Colonic mucosa (tissue), 4 donors: ENCODE measurements at regions of chr7 and their contacts with region 1.

Region 1: DNA sequence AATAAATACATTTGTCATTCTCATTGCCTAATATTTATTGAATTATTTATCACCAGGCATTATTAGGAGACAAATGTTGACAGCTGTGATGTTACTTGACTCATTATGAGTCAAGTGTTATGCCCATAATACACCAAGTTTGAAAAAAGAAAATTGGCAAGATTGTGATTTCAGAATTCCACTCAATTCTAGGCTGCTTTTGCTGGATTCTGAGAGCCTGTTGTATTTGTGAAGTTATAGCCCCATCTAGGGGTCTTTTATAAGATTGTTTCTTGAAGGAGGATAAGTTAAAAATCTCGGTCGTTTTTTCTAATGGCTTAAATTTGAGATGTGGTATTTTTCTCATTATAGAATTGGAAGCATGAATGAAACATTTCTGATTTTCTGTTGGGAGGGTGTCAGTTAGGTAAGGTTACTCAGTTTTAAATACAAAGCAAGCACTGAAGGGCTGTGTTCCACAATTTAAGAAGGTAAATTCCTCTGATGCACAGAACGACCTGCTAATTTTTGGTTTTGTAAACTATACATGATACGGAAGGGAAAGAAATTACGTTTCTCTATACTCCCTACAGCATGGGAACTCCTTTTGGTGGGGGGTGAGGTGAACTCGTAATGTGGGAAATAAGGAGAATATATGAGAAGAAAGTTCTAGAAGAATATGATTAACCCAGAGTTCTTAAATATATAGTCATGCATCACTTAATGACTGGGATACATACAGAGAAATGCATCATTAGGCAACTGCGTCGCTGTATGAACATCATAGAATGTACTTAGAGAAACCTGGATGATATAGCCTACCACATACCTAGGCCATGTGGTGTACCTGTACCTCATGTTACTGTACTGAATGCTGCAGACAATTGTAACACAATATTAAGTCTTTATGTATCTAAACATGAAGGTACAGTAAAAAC is 2.6 kb downstream of the STK31 start:
- DNase-seq: no peak
- H3K4me3 ChIP-seq: no peak overlapping the region
- H3K27ac ChIP-seq: no peak overlapping the region
- H3K4me1 ChIP-seq: no peaks in the 10 kb centered on the region
- H3K27me3 ChIP-seq: no peaks in the 10 kb centered on the region
- CTCF ChIP-seq: peak; percentile 33

Region 2: GRCh38 chr7:23570592-23571200 is 141.9 kb before region 1 on chr7:
- intact Hi-C with region 1: loop called (anchors 2 kb)
- DNase-seq: peak; percentile 80
- H3K4me3 ChIP-seq: no peak overlapping the region
- H3K27ac ChIP-seq: no peak overlapping the region
- H3K4me1 ChIP-seq: no peaks in the 10 kb centered on the region
- H3K27me3 ChIP-seq: no peaks in the 10 kb centered on the region
- CTCF ChIP-seq: peak; percentile 77

Region 3: GRCh38 chr7:23654508-23654907 is 58.1 kb before region 1 on chr7:
- intact Hi-C with region 1: loop called (anchors 10 kb)
- DNase-seq: peak; percentile 40
- H3K4me3 ChIP-seq: no peak overlapping the region
- H3K27ac ChIP-seq: no peak overlapping the region
- H3K4me1 ChIP-seq: no peaks in the 10 kb centered on the region
- H3K27me3 ChIP-seq: no peaks in the 10 kb centered on the region
- CTCF ChIP-seq: peak; percentile 49

Region 4: DNA sequence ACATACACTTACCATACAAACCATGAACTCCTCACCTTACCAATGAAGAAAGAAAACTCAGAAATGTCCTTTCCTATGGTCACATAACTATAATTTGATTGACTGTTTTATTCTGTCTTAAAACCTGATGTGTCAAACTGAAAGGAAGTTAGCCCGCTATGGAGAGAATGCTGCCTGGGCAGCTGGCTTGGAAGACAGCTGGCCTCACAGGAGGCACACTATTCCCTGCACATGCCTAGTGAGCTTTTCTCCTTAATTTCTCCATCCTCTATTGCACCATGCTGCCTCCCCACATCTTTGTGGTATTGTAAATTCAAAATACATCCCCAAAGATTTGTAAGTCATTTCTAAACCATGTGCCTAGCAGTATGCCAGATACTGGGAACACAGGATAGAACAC is 160.7 kb after region 1 on chr7:
- intact Hi-C with region 1: no loop called
- DNase-seq: no peak
- H3K4me3 ChIP-seq: no peak overlapping the region
- H3K27ac ChIP-seq: no peak overlapping the region
- H3K4me1 ChIP-seq: no peaks in the 10 kb centered on the region
- H3K27me3 ChIP-seq: no peaks in the 10 kb centered on the region
- CTCF ChIP-seq: no peak